SK-N-SH (cell line): ENCODE measurements at regions of chr15 and their contacts with region 1.

Region 1: GRCh38 chr15:68559345-68560310 is 19.2 kb upstream of the CORO2B start:
- DNase-seq: peak; percentile 93
- H3K4me3 ChIP-seq: peak overlapping the region; percentile 43 to 61
- H3K27ac ChIP-seq: no peak overlapping the region
- H3K4me1 ChIP-seq: peaks cover 0 to 7% of the 10 kb centered on the region in 2 experiments; a peak in 1 of 4 replicates
- H3K27me3 ChIP-seq: no peaks in the 10 kb centered on the region
- CTCF ChIP-seq: peak; percentile 91
- EP300 ChIP-seq: no peak
- RAD21 ChIP-seq: peak; percentile 79

Region 2: DNA sequence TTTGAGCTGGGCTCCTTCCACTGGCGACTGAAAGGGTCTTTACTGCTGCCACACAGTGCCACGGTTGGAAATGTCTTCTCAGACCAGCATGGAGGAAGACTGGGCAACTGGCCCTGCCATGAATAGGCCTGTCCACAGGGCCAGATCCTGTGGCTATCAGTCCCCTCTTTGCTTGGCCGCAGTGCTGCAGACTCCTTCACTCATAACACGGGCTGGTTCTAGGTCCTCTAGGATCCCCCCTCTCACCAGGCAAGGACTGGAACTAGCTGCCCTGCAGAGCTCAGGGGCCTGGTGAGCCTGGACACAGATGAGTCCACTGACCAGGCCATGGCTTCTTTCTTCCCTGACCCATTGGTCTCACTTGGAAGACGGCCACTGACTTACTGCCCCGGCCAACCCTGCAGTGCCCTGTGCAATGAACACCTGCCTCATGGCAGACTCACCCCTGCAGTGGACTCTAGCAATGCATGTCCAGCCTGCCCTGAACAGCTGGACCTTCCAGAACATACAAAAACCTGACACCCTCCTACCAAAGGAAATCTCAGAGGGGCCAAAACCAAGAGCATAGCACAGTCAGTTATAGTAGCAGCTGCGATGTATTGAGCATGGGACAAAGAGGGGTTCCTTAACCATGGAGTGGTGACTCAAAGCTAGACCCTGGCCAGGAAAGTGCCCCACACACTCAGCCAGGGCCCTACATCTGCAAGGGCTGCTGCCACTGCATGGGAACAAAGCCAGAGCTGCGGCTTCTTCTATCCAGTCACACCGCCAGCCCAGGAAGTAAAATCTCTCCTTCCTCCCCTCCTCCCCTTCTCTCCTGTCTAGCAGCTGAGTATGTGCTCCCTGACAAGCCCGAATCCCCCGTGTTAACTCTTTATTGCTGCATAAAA is 55.6 kb before region 1 on chr15:
- CTCF ChIA-PET with region 1: no interaction called
- POLR2A ChIA-PET with region 1: no interaction called
- DNase-seq: no peak
- H3K4me3 ChIP-seq: no peak overlapping the region
- H3K27ac ChIP-seq: no peak overlapping the region
- H3K4me1 ChIP-seq: no peaks in the 10 kb centered on the region
- H3K27me3 ChIP-seq: no peaks in the 10 kb centered on the region
- CTCF ChIP-seq: no peak
- EP300 ChIP-seq: no peak
- RAD21 ChIP-seq: no peak

Region 3: DNA sequence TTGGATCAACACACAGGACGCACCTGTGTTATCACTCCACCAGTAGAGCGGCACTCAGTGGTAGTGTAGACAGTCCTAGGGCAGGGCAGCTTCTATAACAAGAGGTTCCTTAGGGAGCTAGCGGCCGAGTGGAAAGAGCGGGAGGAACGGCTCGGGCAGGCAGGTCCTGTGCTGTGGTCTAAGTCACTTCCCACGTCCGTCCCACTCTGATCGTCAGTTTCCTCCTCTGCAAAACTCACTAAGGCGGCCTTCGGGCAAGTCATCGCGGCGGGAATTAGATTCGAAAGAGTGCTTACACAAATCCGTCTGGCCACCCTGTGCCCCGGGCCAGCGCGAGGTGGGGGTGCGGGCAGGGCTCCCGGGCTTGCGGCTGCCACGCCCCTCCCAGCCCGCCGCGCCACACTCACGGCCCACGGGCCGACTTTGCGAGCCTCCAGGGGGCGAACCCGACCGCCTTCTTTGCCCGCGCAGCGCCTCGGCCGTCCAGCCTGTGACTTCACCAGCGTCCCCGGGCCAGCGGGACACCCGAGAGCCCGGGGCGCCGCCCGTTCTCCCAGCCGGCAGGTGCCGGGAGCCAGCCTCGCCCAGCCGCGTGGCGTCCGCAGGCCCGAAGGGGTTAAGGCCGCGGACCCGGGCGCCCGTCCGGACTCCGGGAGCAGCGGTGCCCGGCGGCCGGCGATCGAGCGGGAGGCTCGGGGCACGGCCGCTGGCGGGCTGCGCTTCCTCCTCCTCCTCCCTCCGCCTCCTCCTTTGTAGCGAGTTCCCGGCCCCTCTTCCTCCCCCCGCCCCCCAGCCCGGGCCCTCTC is 18.7 kb after region 1 on chr15:
- CTCF ChIA-PET with region 1: interaction called, 30 read pairs
- POLR2A ChIA-PET with region 1: no interaction called
- DNase-seq: peak; percentile 81
- H3K4me3 ChIP-seq: peak overlapping the region; percentile 52 to 78
- H3K27ac ChIP-seq: no peak overlapping the region
- H3K4me1 ChIP-seq: peaks cover 0 to 12% of the 10 kb centered on the region in 2 experiments; a peak in 1 of 4 replicates
- H3K27me3 ChIP-seq: no peaks in the 10 kb centered on the region
- CTCF ChIP-seq: peak; percentile 58
- EP300 ChIP-seq: no peak
- RAD21 ChIP-seq: peak; percentile 50

Region 4: GRCh38 chr15:68608206-68608843 is 48.7 kb after region 1 on chr15:
- CTCF ChIA-PET with region 1: interaction called, 10 read pairs
- POLR2A ChIA-PET with region 1: no interaction called
- DNase-seq: no peak
- H3K4me3 ChIP-seq: no peak overlapping the region
- H3K27ac ChIP-seq: no peak overlapping the region
- H3K4me1 ChIP-seq: peaks cover 7 to 9% of the 10 kb centered on the region in 2 experiments; a peak in 2 of 4 replicates
- H3K27me3 ChIP-seq: no peaks in the 10 kb centered on the region
- CTCF ChIP-seq: no peak
- EP300 ChIP-seq: no peak
- RAD21 ChIP-seq: no peak

Region 5: DNA sequence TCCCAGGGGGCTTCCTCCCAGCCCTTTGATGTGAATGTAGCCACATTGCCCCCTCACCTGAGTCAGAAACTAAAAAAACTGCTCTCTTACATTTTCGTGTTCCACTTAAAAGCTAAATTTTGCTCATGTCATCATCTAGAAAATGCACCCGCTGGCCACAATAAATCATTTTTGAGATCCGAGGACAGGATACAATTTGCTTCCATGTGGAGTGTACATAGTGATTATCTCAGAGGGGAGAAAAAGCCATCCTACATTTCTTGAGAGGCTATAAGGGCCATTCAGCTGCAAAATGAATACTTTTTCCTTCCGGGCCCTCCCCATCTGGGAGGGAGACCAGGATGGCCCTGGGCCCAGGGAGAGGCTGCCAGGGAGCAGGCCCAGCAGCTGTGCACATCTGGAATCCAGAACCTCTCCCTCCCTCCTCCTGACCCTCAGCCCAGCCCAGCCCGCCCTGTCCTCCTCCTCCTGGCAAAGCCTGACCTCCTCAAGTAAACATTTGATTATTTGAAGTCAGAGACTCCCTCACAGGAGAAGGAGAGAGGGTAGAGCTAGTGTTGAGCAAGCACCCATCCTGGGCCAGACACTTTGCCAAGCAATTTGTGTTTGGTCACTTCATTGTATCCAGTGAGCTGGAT is 78.3 kb after region 1 on chr15:
- CTCF ChIA-PET with region 1: interaction called, 16 read pairs
- POLR2A ChIA-PET with region 1: no interaction called
- DNase-seq: no peak
- H3K4me3 ChIP-seq: no peak overlapping the region
- H3K27ac ChIP-seq: no peak overlapping the region
- H3K4me1 ChIP-seq: peaks cover 19 to 46% of the 10 kb centered on the region in 2 experiments; a peak in 3 of 4 replicates
- H3K27me3 ChIP-seq: no peaks in the 10 kb centered on the region
- CTCF ChIP-seq: no peak
- EP300 ChIP-seq: no peak
- RAD21 ChIP-seq: no peak

Region 6: DNA sequence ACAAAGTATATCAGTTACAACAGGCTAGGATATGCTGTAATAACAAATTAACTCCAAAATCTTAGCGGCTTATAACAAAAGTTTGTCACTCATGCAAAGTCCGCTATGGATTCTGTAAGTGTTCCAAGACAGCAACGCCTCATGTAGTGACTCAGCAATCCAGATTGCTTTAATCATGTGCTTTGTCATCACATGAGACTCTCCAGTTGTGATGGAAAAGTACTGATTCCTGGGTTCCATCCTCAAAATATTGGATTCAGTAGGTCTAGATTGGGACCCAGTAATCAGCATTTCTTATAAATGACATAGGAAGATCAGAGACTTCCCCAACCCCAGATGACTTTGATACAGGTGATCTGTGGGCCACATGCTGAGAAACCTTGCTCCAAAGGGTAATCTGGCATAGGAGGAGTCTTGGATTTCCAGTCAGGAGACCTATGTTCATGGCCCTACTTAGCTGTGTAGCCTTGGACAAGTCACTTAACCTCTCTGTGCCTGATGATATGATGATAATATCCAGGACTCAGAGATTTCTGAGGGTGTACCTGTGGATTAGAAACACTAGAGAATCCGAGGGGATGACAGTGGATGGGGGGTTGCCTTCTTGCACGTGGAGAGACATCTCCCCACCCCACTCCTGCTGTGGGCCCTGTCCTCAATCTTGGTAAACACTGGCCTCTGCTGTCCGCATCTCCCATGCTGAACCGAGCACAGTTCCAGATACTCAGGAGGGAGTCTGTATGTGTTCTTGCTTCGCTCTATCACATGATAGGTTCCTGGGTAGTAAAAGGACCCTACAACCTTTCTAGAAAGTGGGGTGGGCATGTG is 84.7 kb after region 1 on chr15:
- CTCF ChIA-PET with region 1: interaction called, 21 read pairs
- POLR2A ChIA-PET with region 1: no interaction called
- DNase-seq: no peak
- H3K4me3 ChIP-seq: no peak overlapping the region
- H3K27ac ChIP-seq: no peak overlapping the region
- H3K4me1 ChIP-seq: peaks cover 13% of the 10 kb centered on the region in 2 experiments; a peak in 2 of 4 replicates
- H3K27me3 ChIP-seq: no peaks in the 10 kb centered on the region
- CTCF ChIP-seq: no peak
- EP300 ChIP-seq: no peak
- RAD21 ChIP-seq: peak; percentile 41; the same call in 1 of the 2 replicates

Region 7: GRCh38 chr15:68666120-68666811 is 106.6 kb after region 1 on chr15:
- CTCF ChIA-PET with region 1: interaction called, 464 read pairs
- POLR2A ChIA-PET with region 1: no interaction called
- DNase-seq: no peak
- H3K4me3 ChIP-seq: no peak overlapping the region
- H3K27ac ChIP-seq: no peak overlapping the region
- H3K4me1 ChIP-seq: no peaks in the 10 kb centered on the region; a peak in 1 of 4 replicates
- H3K27me3 ChIP-seq: no peaks in the 10 kb centered on the region
- CTCF ChIP-seq: no peak
- EP300 ChIP-seq: no peak
- RAD21 ChIP-seq: no peak

Region 8: GRCh38 chr15:68924866-68925560 is 365.4 kb after region 1 on chr15:
- CTCF ChIA-PET with region 1: interaction called, 34 read pairs
- POLR2A ChIA-PET with region 1: interaction called, 3 read pairs
- DNase-seq: peak; percentile 86
- H3K4me3 ChIP-seq: peak overlapping the region in 1 of 2 experiments; percentile 24; a peak in 1 of 4 replicates
- H3K27ac ChIP-seq: no peak overlapping the region
- H3K4me1 ChIP-seq: peaks cover 0 to 2% of the 10 kb centered on the region in 2 experiments; a peak in 1 of 4 replicates
- H3K27me3 ChIP-seq: peaks cover 9% of the 10 kb centered on the region; the same call in 1 of the 2 replicates
- CTCF ChIP-seq: peak; percentile 91
- EP300 ChIP-seq: no peak
- RAD21 ChIP-seq: peak; percentile 98